A673 (cell line): ENCODE measurements at regions of chr2 and their contacts with region 1.

Region 1: DNA sequence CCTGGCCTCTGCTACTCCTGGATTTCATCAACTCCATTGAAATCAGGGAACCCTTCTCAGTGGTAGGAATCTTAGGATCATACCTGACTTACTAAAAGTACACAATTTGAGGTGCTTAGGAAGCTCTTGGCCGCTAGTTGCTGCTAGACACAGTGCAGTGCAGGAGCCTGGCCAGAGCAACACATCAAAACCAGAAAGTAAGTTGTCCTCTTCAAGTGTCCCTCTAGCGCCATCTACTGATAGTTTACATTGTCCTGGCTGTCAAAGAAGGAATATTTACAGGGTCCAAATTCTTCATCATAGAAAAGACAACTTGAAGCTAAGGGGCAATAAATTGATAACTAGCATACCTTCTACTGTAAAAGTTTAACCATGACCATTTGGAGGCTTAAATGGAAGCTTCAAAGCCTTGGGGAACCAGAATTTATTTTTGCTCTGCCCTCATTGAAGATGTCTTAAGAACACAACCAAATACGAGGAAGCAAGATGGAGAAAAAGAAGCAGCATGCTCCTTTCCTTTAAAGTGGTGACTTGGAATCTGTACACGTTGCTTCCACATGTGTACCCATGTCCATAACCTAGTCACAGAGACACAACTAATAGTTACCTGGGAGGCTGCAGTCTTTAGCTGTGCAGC is 889.1 kb upstream of the GCFC2 start:
- DNase-seq: peak; percentile 91
- H3K4me3 ChIP-seq: no peak overlapping the region
- H3K27ac ChIP-seq: no peak overlapping the region
- H3K4me1 ChIP-seq: no peaks in the 10 kb centered on the region
- H3K27me3 ChIP-seq: no peaks in the 10 kb centered on the region
- CTCF ChIP-seq: peak; percentile 87

Region 2: GRCh38 chr2:75640621-75641121 is 959.2 kb before region 1 on chr2:
- CTCF ChIA-PET with region 1: interaction called, 3 read pairs
- POLR2A ChIA-PET with region 1: no interaction called
- intact Hi-C with region 1: loop called (anchors 2 kb)
- DNase-seq: peak; percentile 85
- H3K4me3 ChIP-seq: no peak overlapping the region
- H3K27ac ChIP-seq: no peak overlapping the region
- H3K4me1 ChIP-seq: peaks cover 8% of the 10 kb centered on the region
- H3K27me3 ChIP-seq: no peaks in the 10 kb centered on the region
- CTCF ChIP-seq: peak; percentile 99

Region 3: GRCh38 chr2:75729861-75730260 is 870.0 kb before region 1 on chr2:
- CTCF ChIA-PET with region 1: no interaction called
- POLR2A ChIA-PET with region 1: no interaction called
- intact Hi-C with region 1: loop called (anchors 10 kb)
- DNase-seq: peak; percentile 53
- H3K4me3 ChIP-seq: no peak overlapping the region
- H3K27ac ChIP-seq: no peak overlapping the region
- H3K4me1 ChIP-seq: peaks cover 4% of the 10 kb centered on the region
- H3K27me3 ChIP-seq: no peaks in the 10 kb centered on the region
- CTCF ChIP-seq: peak; percentile 59

Region 4: GRCh38 chr2:75787532-75788132 is 812.2 kb before region 1 on chr2:
- CTCF ChIA-PET with region 1: no interaction called
- POLR2A ChIA-PET with region 1: no interaction called
- intact Hi-C with region 1: loop called (anchors 2 kb)
- DNase-seq: peak; percentile 77
- H3K4me3 ChIP-seq: no peak overlapping the region
- H3K27ac ChIP-seq: no peak overlapping the region
- H3K4me1 ChIP-seq: no peaks in the 10 kb centered on the region
- H3K27me3 ChIP-seq: no peaks in the 10 kb centered on the region
- CTCF ChIP-seq: peak; percentile 68

Region 5: DNA sequence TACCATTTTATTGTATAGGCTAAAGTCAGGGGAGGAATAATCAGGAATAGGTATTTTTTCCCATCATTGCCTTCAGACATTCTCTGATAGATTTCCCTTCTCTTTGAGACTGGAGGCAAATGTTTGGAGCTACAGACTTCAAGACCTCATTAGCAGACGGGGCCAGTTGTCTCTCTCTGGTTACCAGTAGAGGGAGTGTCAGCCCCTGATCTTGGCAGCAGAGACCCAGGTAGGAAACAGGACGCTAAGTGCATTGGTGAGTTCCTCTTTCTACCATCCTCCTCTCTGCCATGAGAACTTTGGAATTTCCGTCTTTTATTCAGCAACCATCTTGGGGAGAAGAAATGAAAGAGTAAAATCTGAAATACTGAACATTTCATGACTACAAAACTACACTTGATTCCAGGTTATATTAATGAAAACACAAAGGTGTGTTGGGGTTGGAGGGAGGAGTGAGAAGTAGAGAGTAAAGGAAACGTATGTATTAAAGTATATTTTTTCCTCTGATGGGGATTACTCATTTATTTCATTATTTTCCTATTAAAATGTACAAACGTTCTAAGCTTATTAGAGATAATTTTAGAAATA is 703.0 kb before region 1 on chr2:
- CTCF ChIA-PET with region 1: interaction called, 6 read pairs
- POLR2A ChIA-PET with region 1: no interaction called
- intact Hi-C with region 1: loop called (anchors 5 kb)
- DNase-seq: peak; percentile 73
- H3K4me3 ChIP-seq: no peak overlapping the region
- H3K27ac ChIP-seq: no peak overlapping the region
- H3K4me1 ChIP-seq: no peaks in the 10 kb centered on the region
- H3K27me3 ChIP-seq: no peaks in the 10 kb centered on the region
- CTCF ChIP-seq: peak; percentile 78

Region 6: DNA sequence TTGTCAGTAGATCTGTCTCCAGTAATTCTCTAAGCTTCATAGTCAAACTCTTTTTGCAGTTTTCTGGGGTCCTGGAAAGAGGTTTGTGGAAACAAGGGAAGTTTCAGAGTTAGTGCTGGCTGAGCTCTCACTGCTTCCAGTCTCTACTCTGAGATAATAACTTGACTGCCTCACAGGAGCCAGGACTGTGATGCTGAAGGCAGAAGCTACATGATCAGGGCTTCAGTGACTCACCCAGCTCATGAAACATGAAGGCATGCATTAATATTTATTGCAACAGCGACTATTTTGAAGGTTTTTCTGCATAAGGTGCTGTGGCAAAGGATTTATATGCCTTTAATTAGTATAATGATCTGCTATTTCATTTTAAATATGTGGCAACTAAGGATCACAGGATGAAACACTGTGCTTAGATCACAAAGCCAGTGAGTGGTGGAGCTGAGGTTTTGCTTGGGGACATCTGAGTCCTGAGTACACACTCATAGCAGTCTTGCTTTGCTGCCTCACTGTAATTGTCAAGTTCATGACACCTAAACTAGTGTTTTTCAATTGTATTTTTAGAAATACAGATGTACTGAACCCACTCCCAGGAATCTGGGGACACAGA is 440.7 kb before region 1 on chr2:
- CTCF ChIA-PET with region 1: no interaction called
- POLR2A ChIA-PET with region 1: no interaction called
- intact Hi-C with region 1: no loop called
- DNase-seq: no peak
- H3K4me3 ChIP-seq: no peak overlapping the region
- H3K27ac ChIP-seq: no peak overlapping the region
- H3K4me1 ChIP-seq: no peaks in the 10 kb centered on the region
- H3K27me3 ChIP-seq: no peaks in the 10 kb centered on the region
- CTCF ChIP-seq: no peak

Region 7: GRCh38 chr2:76197842-76198448 is 401.9 kb before region 1 on chr2:
- CTCF ChIA-PET with region 1: no interaction called
- POLR2A ChIA-PET with region 1: no interaction called
- intact Hi-C with region 1: loop called (anchors 1 kb)
- DNase-seq: peak; percentile 87
- H3K4me3 ChIP-seq: no peak overlapping the region
- H3K27ac ChIP-seq: no peak overlapping the region
- H3K4me1 ChIP-seq: peaks cover 7% of the 10 kb centered on the region
- H3K27me3 ChIP-seq: no peaks in the 10 kb centered on the region
- CTCF ChIP-seq: peak; percentile 77

Region 8: DNA sequence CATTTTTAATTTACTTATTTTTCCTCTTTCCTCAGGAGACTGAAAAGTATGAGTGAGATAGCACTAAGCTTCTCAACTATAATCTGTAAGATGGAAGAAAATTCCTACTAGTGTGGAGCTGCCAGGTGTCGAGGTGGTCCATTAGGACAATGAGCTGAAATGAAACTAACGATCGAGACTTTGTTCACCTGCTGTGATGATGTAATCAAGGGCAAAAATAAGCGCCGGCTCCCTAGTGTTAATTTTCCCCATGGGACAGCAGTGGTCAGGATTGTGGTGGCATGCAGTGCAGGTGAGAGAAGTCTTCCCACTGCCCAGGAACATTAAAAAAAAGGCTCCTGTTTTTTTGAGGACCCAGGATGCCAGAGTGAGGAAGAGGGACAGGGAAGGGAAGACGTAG is 30.0 kb before region 1 on chr2:
- CTCF ChIA-PET with region 1: no interaction called
- POLR2A ChIA-PET with region 1: no interaction called
- intact Hi-C with region 1: no loop called
- DNase-seq: no peak
- H3K4me3 ChIP-seq: no peak overlapping the region
- H3K27ac ChIP-seq: no peak overlapping the region
- H3K4me1 ChIP-seq: no peaks in the 10 kb centered on the region
- H3K27me3 ChIP-seq: no peaks in the 10 kb centered on the region
- CTCF ChIP-seq: no peak